ENCODE measurements at regions of chr16 and their contacts with region 1.

Region 1: DNA sequence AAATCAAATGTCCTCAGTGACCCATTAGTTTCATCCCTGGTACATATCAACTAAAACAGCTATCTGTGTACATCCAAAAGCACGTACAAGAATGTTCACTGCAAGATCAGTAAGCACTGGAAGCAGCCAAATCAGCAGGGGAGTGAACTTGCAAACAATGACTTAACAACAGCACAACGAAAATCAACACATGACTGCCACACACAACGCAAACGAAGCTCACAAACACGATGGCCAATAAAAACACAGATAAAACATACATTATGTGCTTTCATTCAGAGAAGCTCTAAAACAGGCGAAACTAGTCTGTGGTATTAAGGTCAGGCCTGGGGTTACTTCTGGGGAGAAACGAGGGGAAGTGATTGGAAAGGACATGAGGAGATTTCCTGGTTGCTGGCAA is 60.6 kb downstream of the XPO6 start:
- DNase-seq: no peak
- H3K4me3 ChIP-seq: no peak overlapping the region
- H3K27ac ChIP-seq: no peak overlapping the region
- H3K4me1 ChIP-seq: peaks cover under 1% of the 10 kb centered on the region
- H3K27me3 ChIP-seq: no peaks in the 10 kb centered on the region
- CTCF ChIP-seq: no peak

Region 2: DNA sequence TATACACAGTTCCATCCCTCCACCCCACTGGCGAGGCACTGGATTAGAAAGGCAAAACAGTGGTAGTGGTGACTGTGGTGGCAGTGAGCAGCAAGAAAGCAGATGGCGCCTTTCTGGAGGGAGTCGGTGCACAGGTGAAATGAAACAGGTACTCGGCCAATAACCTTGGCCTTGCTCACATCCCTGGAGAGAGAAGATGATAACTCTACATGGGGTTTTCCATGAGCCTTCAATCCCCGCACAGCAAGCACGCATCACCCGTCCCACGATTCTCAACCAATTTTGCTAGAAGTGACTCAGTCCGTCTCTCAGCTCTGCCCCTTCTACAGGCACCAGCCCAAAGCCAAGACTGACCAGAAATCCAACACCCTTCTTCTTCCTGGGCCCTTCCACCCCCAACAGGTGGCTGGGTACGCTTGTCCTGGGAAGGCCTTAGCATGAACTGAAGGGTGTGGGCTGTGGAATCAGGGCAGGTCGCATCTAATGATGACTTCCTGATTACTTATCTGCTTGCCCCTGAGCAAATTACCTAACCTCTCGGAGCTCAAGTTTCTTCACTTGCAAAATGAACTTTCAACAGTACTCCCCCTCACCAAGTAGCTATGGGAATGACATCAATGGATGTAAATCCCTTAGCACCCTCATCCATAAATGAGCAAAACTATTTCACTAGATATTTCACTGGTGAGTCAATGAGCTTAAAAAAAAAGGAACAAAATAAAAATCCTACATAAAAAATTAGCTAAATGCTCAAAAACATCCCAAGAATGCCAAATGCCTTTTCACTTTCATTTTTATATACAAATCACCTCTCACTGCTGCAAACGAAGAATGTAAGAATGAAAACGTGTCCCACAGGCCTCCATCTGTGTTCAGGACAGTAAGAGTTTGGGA is 42.6 kb after region 1 on chr16:
- CTCF ChIA-PET with region 1: no interaction called
- POLR2A ChIA-PET with region 1: no interaction called
- intact Hi-C with region 1: loop called (anchors 5 kb)
- DNase-seq: peak; percentile 67
- H3K4me3 ChIP-seq: peak overlapping the region; percentile 5
- H3K27ac ChIP-seq: peak overlapping the region; percentile 77
- H3K4me1 ChIP-seq: peaks cover 53% of the 10 kb centered on the region
- H3K27me3 ChIP-seq: no peaks in the 10 kb centered on the region
- CTCF ChIP-seq: no peak

Measured in A673 (cell line).